H1 (cell line): ENCODE measurements at regions of chr7 and their contacts with region 1.

Region 1: DNA sequence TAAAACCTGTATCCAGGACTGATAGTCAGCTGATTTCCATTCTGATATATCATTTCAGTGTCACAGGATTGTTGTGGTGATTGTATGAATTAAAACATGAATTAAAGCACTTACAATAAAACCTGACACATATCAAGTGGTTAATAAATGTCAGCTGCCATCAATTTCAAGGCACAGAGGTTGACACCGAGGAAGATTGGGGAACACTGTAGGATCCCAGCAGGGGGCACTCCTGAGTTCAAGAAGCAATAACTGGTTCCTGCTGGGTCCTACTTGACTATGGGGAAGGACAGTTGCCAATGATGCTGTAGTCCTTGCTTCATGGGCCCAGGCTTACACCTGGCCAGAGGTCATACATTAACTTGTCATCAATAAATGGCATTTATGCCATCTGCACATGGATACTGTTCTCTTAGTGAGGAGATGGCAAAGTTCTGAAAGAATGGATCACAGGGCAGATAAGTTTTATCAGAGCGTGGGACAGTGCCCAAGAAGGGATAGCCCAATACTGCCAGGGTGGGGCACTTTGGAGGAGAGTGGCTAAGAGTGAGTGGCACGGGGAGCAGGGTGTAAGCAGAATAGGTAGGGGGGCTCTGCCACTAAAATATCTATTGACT is 24.1 kb downstream of the FZD1 start:
- DNase-seq: peak in 1 of 2 experiments; percentile 82
- H3K4me3 ChIP-seq: no peak overlapping the region
- H3K27ac ChIP-seq: no peak overlapping the region
- H3K4me1 ChIP-seq: peaks cover 0 to 5% (median 2%) of the 10 kb centered on the region in 4 experiments; a peak in 3 of 7 replicates
- H3K27me3 ChIP-seq: peaks cover 4 to 21% (median 10%) of the 10 kb centered on the region in 4 experiments; a peak in 6 of 7 replicates
- CTCF ChIP-seq: peak; percentile 38 to 73 (median 71)
- EP300 ChIP-seq: no peak
- POLR2A ChIP-seq: no peak
- RAD21 ChIP-seq: peak; percentile 66 to 80

Region 2: DNA sequence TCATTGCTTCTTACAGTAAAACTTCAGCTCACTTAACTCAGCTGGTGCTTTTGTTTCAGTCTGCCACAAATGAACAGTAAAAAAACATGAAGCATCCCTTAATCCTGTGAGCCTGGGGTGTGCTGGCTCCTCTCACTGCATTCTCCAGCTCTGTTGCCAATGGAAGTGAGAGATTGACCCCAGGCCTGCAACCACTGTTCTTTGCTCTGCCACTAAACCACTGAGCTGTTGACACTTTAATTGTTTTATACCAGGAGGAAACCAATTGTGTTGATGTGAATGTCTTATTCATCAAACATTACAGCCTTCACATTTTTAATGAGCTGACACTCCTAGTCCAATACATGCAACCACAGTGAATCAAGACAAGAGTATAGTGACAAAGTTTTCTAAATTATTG is 93.5 kb before region 1 on chr7:
- CTCF ChIA-PET with region 1: no interaction called
- POLR2A ChIA-PET with region 1: no interaction called
- DNase-seq: no peak
- H3K4me3 ChIP-seq: no peak overlapping the region
- H3K27ac ChIP-seq: no peak overlapping the region
- H3K4me1 ChIP-seq: peaks cover 0 to 4% (median 0%) of the 10 kb centered on the region in 4 experiments; a peak in 1 of 7 replicates
- H3K27me3 ChIP-seq: no peaks in the 10 kb centered on the region
- CTCF ChIP-seq: no peak
- EP300 ChIP-seq: no peak
- POLR2A ChIP-seq: no peak
- RAD21 ChIP-seq: no peak

Region 3: GRCh38 chr7:91302794-91303193 is 14.5 kb after region 1 on chr7:
- CTCF ChIA-PET with region 1: interaction called, 13 read pairs
- POLR2A ChIA-PET with region 1: no interaction called
- DNase-seq: no peak
- H3K4me3 ChIP-seq: no peak overlapping the region
- H3K27ac ChIP-seq: no peak overlapping the region
- H3K4me1 ChIP-seq: no peaks in the 10 kb centered on the region; a peak in 1 of 7 replicates
- H3K27me3 ChIP-seq: no peaks in the 10 kb centered on the region; a peak in 1 of 7 replicates
- CTCF ChIP-seq: no peak
- EP300 ChIP-seq: no peak
- POLR2A ChIP-seq: no peak
- RAD21 ChIP-seq: no peak

Region 4: GRCh38 chr7:91310830-91311460 is 22.6 kb after region 1 on chr7:
- CTCF ChIA-PET with region 1: interaction called, 11 read pairs
- POLR2A ChIA-PET with region 1: no interaction called
- DNase-seq: no peak
- H3K4me3 ChIP-seq: no peak overlapping the region
- H3K27ac ChIP-seq: no peak overlapping the region
- H3K4me1 ChIP-seq: no peaks in the 10 kb centered on the region
- H3K27me3 ChIP-seq: no peaks in the 10 kb centered on the region
- CTCF ChIP-seq: no peak
- EP300 ChIP-seq: no peak
- POLR2A ChIP-seq: no peak
- RAD21 ChIP-seq: no peak

Region 5: GRCh38 chr7:91446819-91447218 is 158.5 kb after region 1 on chr7:
- CTCF ChIA-PET with region 1: no interaction called
- POLR2A ChIA-PET with region 1: no interaction called
- DNase-seq: no peak
- H3K4me3 ChIP-seq: no peak overlapping the region
- H3K27ac ChIP-seq: no peak overlapping the region
- H3K4me1 ChIP-seq: no peaks in the 10 kb centered on the region
- H3K27me3 ChIP-seq: peaks cover 0 to 2% (median 0%) of the 10 kb centered on the region in 4 experiments; a peak in 1 of 7 replicates
- CTCF ChIP-seq: no peak
- EP300 ChIP-seq: no peak
- POLR2A ChIP-seq: no peak
- RAD21 ChIP-seq: no peak